ENCODE measurements at regions of chr15 and their contacts with region 1.

Region 1: DNA sequence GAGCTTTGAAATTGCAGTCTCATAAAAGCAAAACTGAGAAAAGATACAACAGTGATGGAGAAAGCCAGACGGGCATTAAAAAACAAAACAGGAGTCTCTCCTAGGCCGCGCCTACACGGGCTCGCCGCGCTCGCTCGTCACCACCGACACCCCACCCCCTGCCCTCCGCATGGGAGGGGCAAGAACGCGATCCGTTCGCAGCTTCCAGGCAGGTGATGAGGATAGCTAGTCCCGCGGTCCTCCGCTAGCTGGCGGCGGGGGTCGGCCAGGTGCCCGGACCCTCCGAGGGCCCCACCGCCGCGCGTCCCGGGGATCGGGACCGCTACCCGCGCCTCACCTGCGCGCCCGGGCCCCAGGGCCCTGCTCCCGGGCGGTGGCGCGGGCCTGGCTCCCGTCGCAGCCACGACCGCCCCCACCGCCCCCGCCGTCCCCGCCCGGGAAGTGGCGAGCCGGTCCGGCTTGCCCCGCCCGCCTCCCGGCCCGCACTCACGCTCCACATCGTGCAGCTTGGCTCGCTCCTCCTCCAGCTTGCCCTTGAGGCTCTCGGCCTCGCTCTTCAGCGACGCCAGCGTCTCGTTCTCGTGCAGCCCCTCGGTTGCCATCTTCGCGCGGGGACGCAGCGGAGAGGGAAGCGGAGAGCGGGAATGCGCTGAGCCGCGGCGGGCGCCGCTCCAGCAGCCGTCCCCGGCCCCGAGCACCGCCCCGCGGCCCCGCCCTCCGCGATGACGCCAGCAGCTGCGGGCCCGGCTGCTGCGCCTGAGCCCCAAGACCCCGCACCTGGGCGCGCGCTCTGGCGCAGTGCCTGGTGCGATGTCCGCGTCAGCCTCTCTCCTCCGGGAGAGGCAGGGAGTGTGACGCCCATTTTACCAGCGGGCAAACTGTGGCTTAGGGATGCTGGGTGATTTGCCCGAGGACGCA is 11.7 kb downstream of the GNB5 start:
- DNase-seq: peak; percentile 85
- H3K4me3 ChIP-seq: peak overlapping the region; percentile 72 to 95 (median 95)
- H3K27ac ChIP-seq: peak overlapping the region; percentile 70
- H3K4me1 ChIP-seq: peaks cover 21% of the 10 kb centered on the region
- H3K27me3 ChIP-seq: no peaks in the 10 kb centered on the region
- CTCF ChIP-seq: no peak

Region 2: GRCh38 chr15:52227456-52227855 is 47.9 kb after region 1 on chr15:
- CTCF ChIA-PET with region 1: no interaction called
- dilution Hi-C with region 1: no loop called
- in situ Hi-C with region 1: no loop called
- intact Hi-C with region 1: loop called (anchors 1 kb)
- DNase-seq: peak; percentile 71
- H3K4me3 ChIP-seq: no peak overlapping the region
- H3K27ac ChIP-seq: no peak overlapping the region
- H3K4me1 ChIP-seq: peaks cover 3% of the 10 kb centered on the region
- H3K27me3 ChIP-seq: no peaks in the 10 kb centered on the region
- CTCF ChIP-seq: peak; percentile 78 to 87

Region 3: GRCh38 chr15:52749258-52749657 is 569.7 kb after region 1 on chr15:
- CTCF ChIA-PET with region 1: interaction called, 16 read pairs
- dilution Hi-C with region 1: no loop called
- in situ Hi-C with region 1: no loop called
- intact Hi-C with region 1: no loop called
- DNase-seq: no peak
- H3K4me3 ChIP-seq: no peak overlapping the region
- H3K27ac ChIP-seq: no peak overlapping the region
- H3K4me1 ChIP-seq: no peaks in the 10 kb centered on the region
- H3K27me3 ChIP-seq: peaks cover 13% of the 10 kb centered on the region
- CTCF ChIP-seq: no peak